Dorsolateral prefrontal cortex (tissue), 120 donors: ENCODE measurements at regions of chr18 and their contacts with region 1.

Region 1: GRCh38 chr18:80147418-80148325 is 38.6 kb downstream of the ADNP2 start:
- DNase-seq: peak; percentile 70 to 96 (median 90)
- H3K4me3 ChIP-seq: peak overlapping the region; percentile 48 to 87 (median 70)
- H3K27ac ChIP-seq: peak overlapping the region in 43 of 59 donors; percentile 4 to 83 (median 58)
- H3K27me3 ChIP-seq: no peaks in the 10 kb centered on the region
- CTCF ChIP-seq: peak in 3 of 56 donors; percentile 6 to 16 (median 8)

Region 2: GRCh38 chr18:80108728-80109675 is 38.7 kb before region 1 on chr18 and contains the start of gene ADNP2:
- intact Hi-C with region 1: loop called in 1 of 2 experiments (anchors 5 kb)
- DNase-seq: peak; percentile 61 to 96 (median 84)
- H3K4me3 ChIP-seq: peak within 1 kb of the TSS; percentile 50 to 88 (median 76)
- H3K27ac ChIP-seq: peak within 1 kb of the TSS; percentile 42 to 97 (median 92)
- H3K27me3 ChIP-seq: no peaks in the 10 kb centered on the region
- CTCF ChIP-seq: no peak
- total RNA-seq, gene ADNP2: 15.4 to 33.2 (median 20.9) TPM